IMR-90 (cell line): ENCODE measurements at regions of chr2 and their contacts with region 1.

Region 1: GRCh38 chr2:207487650-207488311 is 42.0 kb upstream of the CREB1 start:
- DNase-seq: peak; percentile 95
- ATAC-seq: peak; percentile 93
- H3K4me3 ChIP-seq: no peak overlapping the region
- H3K27ac ChIP-seq: peak overlapping the region; percentile 33; the same call in 1 of the 2 replicates
- H3K4me1 ChIP-seq: peaks cover 10% of the 10 kb centered on the region
- H3K27me3 ChIP-seq: no peaks in the 10 kb centered on the region
- CTCF ChIP-seq: peak; percentile 66
- POLR2A ChIP-seq: 0 out of 2 replicates have a peak, but pooled peaks have one; percentile 26
- RAD21 ChIP-seq: peak; percentile 76

Region 2: GRCh38 chr2:207529330-207530159 is 41.8 kb after region 1 on chr2 and contains the start of gene CREB1:
- CTCF ChIA-PET with region 1: no interaction called
- POLR2A ChIA-PET with region 1: interaction called, 12 read pairs
- dilution Hi-C with region 1: no loop called
- in situ Hi-C with region 1: no loop called
- intact Hi-C with region 1: loop called (anchors 1 kb)
- DNase-seq: peak; percentile 98
- ATAC-seq: peak; percentile 94
- H3K4me3 ChIP-seq: peak within 1 kb of the TSS; percentile 100
- H3K27ac ChIP-seq: peak within 1 kb of the TSS; percentile 98
- H3K4me1 ChIP-seq: no peaks in the 10 kb centered on the region
- H3K27me3 ChIP-seq: no peaks in the 10 kb centered on the region
- CTCF ChIP-seq: peak; percentile 40
- POLR2A ChIP-seq: peak; percentile 98
- RAD21 ChIP-seq: peak; percentile 39
- total RNA-seq, gene CREB1: 71.9 and 94.5 TPM in 2 replicates

Region 3: DNA sequence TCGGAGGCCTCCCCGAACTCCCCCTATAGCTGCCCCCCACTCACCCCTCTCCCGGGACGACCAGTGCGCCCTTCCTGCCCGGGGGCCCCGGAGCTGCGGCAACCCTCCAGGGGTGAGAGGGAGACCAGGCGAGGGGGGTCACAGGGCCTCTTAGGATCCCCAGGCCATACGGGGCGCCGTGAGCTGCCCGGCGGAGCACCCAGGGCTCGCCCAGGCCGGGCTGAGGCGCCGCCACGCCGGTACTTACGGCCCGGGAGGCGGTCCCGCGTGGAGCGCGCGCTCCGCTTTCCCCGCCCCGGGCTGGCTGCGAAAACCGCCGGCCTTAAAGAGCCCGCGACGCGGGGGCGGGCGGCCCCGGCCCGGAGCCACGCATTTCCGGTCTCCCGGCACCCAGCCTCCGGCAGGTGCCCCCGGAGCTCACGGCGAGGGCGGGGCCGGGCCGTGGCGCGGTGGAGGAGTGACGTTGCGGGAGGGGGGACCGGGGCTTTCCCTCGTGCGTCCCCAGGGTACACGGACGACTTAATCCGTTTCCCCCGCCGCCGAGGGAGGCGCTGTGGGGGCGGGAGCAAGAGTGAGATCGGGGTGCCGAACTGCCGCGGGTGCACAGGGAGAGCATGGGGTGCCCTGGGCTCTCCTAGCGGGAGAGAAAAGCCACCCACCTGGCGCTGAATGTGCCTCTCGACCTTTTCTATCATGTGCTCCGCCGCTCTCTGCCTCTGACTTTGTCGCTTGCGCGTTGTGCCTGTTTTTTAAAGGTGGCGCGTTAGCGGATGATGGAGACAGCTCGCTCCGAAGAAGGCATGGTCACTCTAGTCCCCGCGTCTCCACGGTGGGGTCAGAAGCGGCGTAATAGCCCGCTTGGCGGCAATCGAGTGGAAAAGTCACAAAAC is 137.5 kb after region 1 on chr2 and contains the start of gene METTL21A:
- CTCF ChIA-PET with region 1: interaction called, 3 read pairs
- POLR2A ChIA-PET with region 1: no interaction called
- dilution Hi-C with region 1: no loop called
- in situ Hi-C with region 1: no loop called
- intact Hi-C with region 1: loop called (anchors 2 kb)
- DNase-seq: peak; percentile 86
- ATAC-seq: peak; percentile 92
- H3K4me3 ChIP-seq: peak within 1 kb of the TSS; percentile 88
- H3K27ac ChIP-seq: peak within 1 kb of the TSS; percentile 98
- H3K4me1 ChIP-seq: peaks cover 6% of the 10 kb centered on the region; the same call in 1 of the 2 replicates
- H3K27me3 ChIP-seq: no peaks in the 10 kb centered on the region
- CTCF ChIP-seq: peak; percentile 43
- POLR2A ChIP-seq: peak; percentile 89
- RAD21 ChIP-seq: no peak; the same call in 1 of the 2 replicates
- total RNA-seq, gene METTL21A: 5.9 and 11.4 TPM in 2 replicates

Region 4: GRCh38 chr2:207734264-207734635 is 246.5 kb after region 1 on chr2:
- CTCF ChIA-PET with region 1: no interaction called
- POLR2A ChIA-PET with region 1: no interaction called
- dilution Hi-C with region 1: no loop called
- in situ Hi-C with region 1: no loop called
- intact Hi-C with region 1: loop called (anchors 2 kb)
- DNase-seq: peak; percentile 61
- ATAC-seq: peak; percentile 88
- H3K4me3 ChIP-seq: no peak overlapping the region
- H3K27ac ChIP-seq: no peak overlapping the region
- H3K4me1 ChIP-seq: no peaks in the 10 kb centered on the region
- H3K27me3 ChIP-seq: no peaks in the 10 kb centered on the region
- CTCF ChIP-seq: peak; percentile 53
- POLR2A ChIP-seq: no peak
- RAD21 ChIP-seq: peak; percentile 61

Region 5: DNA sequence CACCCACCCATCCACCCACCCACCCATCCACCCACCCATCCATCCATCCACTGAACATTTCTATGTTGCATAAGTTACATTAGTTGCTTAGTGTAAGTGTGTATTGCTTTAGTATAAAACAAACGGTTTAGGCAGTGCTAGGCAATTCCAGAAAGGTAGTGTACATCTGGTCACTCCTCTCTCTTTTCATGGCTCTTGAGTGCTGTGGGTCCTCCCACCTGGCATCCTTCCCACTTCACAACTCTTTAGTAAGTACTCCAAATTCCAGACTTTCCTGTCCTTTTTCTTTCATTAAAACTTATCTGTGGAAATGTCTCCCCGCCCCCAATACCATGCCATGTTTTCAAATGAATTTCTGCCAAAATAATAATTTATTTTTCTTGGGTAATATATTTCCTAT is 415.0 kb after region 1 on chr2:
- CTCF ChIA-PET with region 1: no interaction called
- POLR2A ChIA-PET with region 1: no interaction called
- dilution Hi-C with region 1: no loop called
- in situ Hi-C with region 1: no loop called
- intact Hi-C with region 1: no loop called
- DNase-seq: no peak
- ATAC-seq: no peak
- H3K4me3 ChIP-seq: no peak overlapping the region
- H3K27ac ChIP-seq: no peak overlapping the region
- H3K4me1 ChIP-seq: no peaks in the 10 kb centered on the region; the same call in 1 of the 2 replicates
- H3K27me3 ChIP-seq: no peaks in the 10 kb centered on the region
- CTCF ChIP-seq: no peak
- POLR2A ChIP-seq: no peak
- RAD21 ChIP-seq: no peak